K562 (cell line): ENCODE measurements at regions of chr10 and their contacts with region 1.

Region 1: DNA sequence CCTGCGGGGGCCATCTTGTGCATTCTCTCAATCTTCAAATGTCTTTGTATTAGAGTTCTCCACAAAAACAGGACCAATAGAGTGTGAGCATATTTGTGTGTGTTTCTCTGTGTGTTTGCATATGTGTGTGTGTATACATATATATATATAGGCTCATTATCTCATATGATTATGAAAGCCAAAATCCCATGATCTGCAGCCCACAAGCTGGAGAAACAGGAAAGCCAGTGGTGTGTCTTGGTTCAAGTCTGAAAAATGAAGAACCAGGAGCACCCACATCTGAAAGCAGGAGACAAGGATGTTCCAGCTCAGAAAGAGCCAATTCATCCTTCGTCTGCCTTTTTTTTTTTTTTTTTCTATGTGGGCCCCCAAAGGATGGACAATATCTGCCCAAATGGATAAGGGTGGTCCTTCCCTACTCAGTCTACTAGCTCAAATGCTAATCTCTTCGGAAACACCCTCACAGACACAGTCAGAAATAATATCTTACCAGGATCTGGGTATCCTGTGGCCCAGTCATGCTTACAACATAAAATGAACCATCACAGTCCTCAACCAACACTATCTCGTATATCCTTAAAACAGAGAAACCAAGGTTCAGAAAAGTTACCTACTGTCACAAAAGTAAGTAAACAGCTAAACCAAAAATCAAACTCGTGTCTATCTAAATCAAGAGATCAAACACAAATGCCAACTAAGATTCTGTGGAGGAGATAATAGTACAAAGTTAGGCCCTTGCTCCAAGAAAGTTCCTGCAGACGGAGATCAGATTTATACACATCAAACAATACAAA is 141.9 kb downstream of the JMJD1C start:
- DNase-seq: peak; percentile 23 to 68 (median 40)
- ATAC-seq: peak; percentile 75
- H3K4me3 ChIP-seq: no peak overlapping the region
- H3K27ac ChIP-seq: peak overlapping the region; percentile 20; the same call in 2 of the 3 replicates
- H3K4me1 ChIP-seq: peaks cover 5 to 25% of the 10 kb centered on the region in 2 experiments
- H3K27me3 ChIP-seq: no peaks in the 10 kb centered on the region; a peak in 1 of 5 replicates
- CTCF ChIP-seq: no peak
- EP300 ChIP-seq: peak; percentile 72; the same call in 1 of the 2 replicates
- POLR2A ChIP-seq: no peak
- RAD21 ChIP-seq: no peak

Region 2: DNA sequence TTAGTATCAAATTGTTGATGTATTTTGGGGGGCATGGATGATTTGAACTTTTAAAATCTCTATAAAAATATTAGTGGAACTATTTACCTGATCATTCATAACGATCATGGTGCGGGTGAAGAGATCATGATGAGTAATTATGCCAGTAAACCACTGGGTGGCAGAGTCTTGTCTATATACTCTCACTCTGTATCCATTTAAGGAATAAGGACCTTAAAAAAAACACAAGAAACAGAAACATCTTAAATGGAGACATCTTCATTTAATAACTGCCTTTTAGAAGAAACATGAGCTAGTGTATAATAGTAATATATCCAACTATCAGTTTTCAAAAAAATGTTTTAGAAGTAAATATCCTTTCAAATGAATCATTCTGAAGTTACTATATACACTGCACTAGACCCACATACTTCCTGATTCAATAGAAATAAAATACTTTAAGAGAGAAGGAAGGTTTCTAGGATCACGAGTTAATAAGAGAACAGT is 106.7 kb before region 1 on chr10:
- CTCF ChIA-PET with region 1: no interaction called
- POLR2A ChIA-PET with region 1: interaction called, 3 read pairs
- in situ Hi-C with region 1: no loop called
- intact Hi-C with region 1: loop called (anchors 10 kb)
- DNase-seq: peak in 2 of 4 experiments; percentile 39 to 61
- ATAC-seq: peak; percentile 79
- H3K4me3 ChIP-seq: no peak overlapping the region
- H3K27ac ChIP-seq: no peak overlapping the region
- H3K4me1 ChIP-seq: no peaks in the 10 kb centered on the region
- H3K27me3 ChIP-seq: no peaks in the 10 kb centered on the region
- CTCF ChIP-seq: peak; percentile 38 to 77 (median 47); a peak in 3 of 6 replicates
- EP300 ChIP-seq: no peak
- POLR2A ChIP-seq: no peak
- RAD21 ChIP-seq: peak; percentile 87 to 90

Region 3: GRCh38 chr10:63275094-63275493 is 48.8 kb before region 1 on chr10:
- CTCF ChIA-PET with region 1: no interaction called
- POLR2A ChIA-PET with region 1: no interaction called
- in situ Hi-C with region 1: no loop called
- intact Hi-C with region 1: loop called (anchors 5 kb)
- DNase-seq: no peak
- ATAC-seq: no peak
- H3K4me3 ChIP-seq: no peak overlapping the region
- H3K27ac ChIP-seq: no peak overlapping the region
- H3K4me1 ChIP-seq: 0 out of 5 replicates have a peak, but pooled peaks cover 1 to 3% of the 10 kb centered on the region in 2 experiments
- H3K27me3 ChIP-seq: no peaks in the 10 kb centered on the region
- CTCF ChIP-seq: no peak
- EP300 ChIP-seq: no peak
- POLR2A ChIP-seq: no peak
- RAD21 ChIP-seq: no peak